CD4-positive, alpha-beta T cell (primary cell): ENCODE measurements at regions of chr1 and their contacts with region 1.

Region 1: DNA sequence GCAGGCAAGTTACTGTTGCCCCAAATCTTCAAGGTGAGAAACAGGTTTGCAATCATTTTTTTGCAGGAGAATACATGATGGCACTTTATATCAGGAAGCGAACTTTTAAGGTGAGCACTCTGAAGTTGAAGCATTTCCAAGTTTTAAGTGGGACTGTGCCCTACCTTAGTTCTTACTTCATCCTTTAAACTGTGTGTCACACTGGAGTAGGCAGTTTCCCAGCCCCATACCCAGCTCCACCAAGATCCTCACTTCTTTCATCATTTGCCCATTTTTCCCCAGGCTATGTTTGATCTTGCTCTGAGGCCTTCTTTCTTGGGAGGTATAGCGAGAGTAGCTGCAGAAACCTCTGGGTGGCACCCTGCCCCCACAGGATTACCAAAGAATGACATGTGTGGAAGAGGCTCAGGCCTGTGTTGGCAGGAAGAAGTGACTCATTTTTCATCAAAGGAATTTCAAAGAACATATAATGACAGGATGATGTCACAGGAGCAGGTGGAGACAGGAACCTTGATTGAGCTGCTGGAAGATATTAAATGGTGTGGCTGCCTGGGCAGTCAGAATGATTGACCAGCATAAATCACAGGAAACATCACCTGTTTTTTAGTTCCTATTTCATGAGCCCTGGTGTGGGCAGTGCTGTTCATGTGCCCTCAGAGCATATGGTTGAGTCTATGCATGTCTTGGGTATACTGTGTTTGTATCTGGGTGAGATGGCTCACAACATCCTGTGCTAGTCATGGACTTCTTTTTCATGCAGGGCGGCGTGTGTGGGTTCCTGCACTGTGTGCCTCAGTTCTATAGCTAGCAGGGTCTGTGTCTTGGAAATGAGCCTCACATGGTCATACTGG is 20.8 kb upstream of the MACF1 start:
- DNase-seq: peak; percentile 67 to 94 (median 80)
- ATAC-seq: peak; percentile 89
- H3K4me3 ChIP-seq: no peak overlapping the region
- H3K4me3 Mint-ChIP-seq: no peak overlapping the region
- H3K27ac ChIP-seq: peak overlapping the region; percentile 85 to 86
- H3K27ac Mint-ChIP-seq: peak overlapping the region; percentile 89
- H3K4me1 ChIP-seq: peaks cover 29% of the 10 kb centered on the region
- H3K4me1 Mint-ChIP-seq: peaks cover 42% of the 10 kb centered on the region
- H3K27me3 ChIP-seq: no peaks in the 10 kb centered on the region
- H3K27me3 Mint-ChIP-seq: no peaks in the 10 kb centered on the region
- CTCF ChIP-seq: peak; percentile 87

Region 2: DNA sequence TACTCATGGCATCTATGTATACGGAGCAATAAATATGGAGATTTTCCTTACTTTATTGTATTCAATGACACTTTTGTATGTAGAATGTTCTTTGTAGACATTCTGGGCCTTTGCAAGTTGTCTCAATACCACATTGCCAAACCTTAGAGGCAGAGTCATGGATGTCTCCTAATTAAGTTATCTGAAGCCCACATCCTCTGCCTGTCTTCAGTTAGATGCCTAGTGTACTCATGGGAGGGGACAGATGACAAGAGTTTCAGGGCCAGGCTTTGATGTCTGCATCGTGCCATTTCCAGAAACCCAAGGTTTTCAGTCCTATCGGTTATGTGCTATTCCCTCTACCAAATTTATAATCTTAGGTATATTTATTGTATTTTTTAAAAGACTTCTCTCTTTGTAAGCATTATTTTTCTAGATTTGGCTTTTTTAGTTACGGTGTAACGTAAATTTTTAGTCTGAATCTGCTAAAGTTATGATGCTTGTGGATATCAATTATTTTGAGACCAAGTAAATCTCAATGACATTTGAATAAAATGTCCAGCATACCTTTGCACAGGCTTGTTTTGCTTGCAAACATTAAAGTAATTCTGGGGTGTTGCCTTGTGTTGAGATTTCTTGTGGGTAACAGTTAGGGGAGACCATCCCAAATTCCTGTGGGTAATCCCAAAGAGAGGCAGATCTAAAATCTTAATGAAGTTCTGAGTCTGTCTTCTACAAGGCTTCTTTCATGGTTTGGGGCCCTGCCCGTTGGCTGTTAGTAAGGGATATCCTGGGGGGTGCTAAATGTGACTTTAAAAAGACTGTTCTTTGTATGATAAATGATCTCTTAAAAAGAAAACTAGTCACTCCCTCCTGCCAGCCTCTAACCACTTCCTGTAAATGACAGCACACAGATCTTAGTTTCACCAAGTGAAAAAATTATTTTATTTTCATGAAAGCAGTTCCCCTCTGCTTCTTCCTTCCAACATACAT is 12.8 kb after region 1 on chr1:
- CTCF ChIA-PET with region 1: interaction called, 75 read pairs
- POLR2A ChIA-PET with region 1: interaction called, 32 read pairs
- intact Hi-C with region 1: loop called in 1 of 2 experiments (anchors 1 kb)
- DNase-seq: peak; percentile 31 to 94 (median 61)
- ATAC-seq: peak; percentile 66
- H3K4me3 ChIP-seq: peak overlapping the region; percentile 2
- H3K4me3 Mint-ChIP-seq: peak overlapping the region; percentile 77
- H3K27ac ChIP-seq: peak overlapping the region; percentile 81 to 85
- H3K27ac Mint-ChIP-seq: peak overlapping the region; percentile 93
- H3K4me1 ChIP-seq: peaks cover 68% of the 10 kb centered on the region
- H3K4me1 Mint-ChIP-seq: peaks cover 82% of the 10 kb centered on the region
- H3K27me3 ChIP-seq: no peaks in the 10 kb centered on the region
- H3K27me3 Mint-ChIP-seq: no peaks in the 10 kb centered on the region
- CTCF ChIP-seq: no peak

Region 3: DNA sequence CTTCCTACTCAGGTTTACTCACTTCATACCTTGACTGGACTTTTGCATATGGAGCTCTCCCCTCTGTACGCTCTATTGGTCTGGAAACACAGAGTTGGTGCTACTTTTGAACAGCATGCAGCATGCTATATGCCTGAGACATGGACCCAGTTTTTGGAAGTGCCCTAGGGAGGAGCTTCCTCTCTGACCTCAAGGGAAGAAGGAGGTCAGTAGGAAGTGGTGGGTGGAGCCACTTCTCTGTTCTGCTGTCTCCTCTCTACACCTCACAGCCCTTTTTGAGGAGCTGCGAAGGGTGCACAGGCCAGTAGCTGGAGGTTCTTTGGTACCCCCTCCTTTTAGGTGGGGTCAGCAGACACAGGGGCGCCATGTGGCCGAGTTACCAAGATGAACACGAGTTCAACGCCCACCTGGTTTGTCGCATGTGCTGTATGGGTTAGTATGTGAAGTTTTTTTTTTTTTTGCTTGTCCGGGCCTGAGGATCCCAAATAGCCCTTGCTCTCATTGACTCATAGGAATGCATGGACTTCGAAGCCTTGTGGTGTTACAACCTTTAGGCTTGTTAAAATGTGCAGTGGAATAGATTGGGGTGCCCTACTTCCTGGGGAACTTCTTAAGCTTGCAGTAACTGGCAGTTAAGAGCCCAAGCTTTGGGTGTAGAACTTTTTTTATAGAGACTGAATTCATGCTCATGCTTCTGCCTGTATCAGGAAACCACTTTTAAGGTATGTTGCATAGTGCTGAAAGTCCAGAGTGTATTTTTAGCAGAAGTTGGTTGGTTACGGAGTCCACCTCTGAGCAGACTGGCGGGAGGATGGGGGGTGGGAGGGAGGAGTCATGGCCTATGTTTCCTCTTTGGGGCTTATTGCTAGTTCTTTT is 31.5 kb after region 1 on chr1:
- CTCF ChIA-PET with region 1: interaction called, 28 read pairs
- POLR2A ChIA-PET with region 1: interaction called, 11 read pairs
- intact Hi-C with region 1: loop called in 1 of 2 experiments (anchors 5 kb)
- DNase-seq: peak in 10 of 14 experiments; percentile 17 to 73 (median 32)
- ATAC-seq: peak; percentile 74
- H3K4me3 ChIP-seq: peak overlapping the region; percentile 62
- H3K4me3 Mint-ChIP-seq: peak overlapping the region; percentile 89
- H3K27ac ChIP-seq: peak overlapping the region; percentile 52 to 77
- H3K27ac Mint-ChIP-seq: peak overlapping the region; percentile 89
- H3K4me1 ChIP-seq: peaks cover 43% of the 10 kb centered on the region
- H3K4me1 Mint-ChIP-seq: peaks cover 59% of the 10 kb centered on the region
- H3K27me3 ChIP-seq: no peaks in the 10 kb centered on the region
- H3K27me3 Mint-ChIP-seq: no peaks in the 10 kb centered on the region
- CTCF ChIP-seq: no peak

Region 4: GRCh38 chr1:39238476-39238875 is 54.7 kb after region 1 on chr1:
- CTCF ChIA-PET with region 1: interaction called, 13 read pairs
- POLR2A ChIA-PET with region 1: interaction called, 3 read pairs
- intact Hi-C with region 1: no loop called
- DNase-seq: no peak
- ATAC-seq: no peak
- H3K4me3 ChIP-seq: no peak overlapping the region
- H3K4me3 Mint-ChIP-seq: no peak overlapping the region
- H3K27ac ChIP-seq: no peak overlapping the region
- H3K27ac Mint-ChIP-seq: peak overlapping the region; percentile 75
- H3K4me1 ChIP-seq: peaks cover 22% of the 10 kb centered on the region
- H3K4me1 Mint-ChIP-seq: peaks cover 54% of the 10 kb centered on the region
- H3K27me3 ChIP-seq: no peaks in the 10 kb centered on the region
- H3K27me3 Mint-ChIP-seq: no peaks in the 10 kb centered on the region
- CTCF ChIP-seq: no peak

Region 5: GRCh38 chr1:39268112-39268581 is 84.4 kb after region 1 on chr1:
- CTCF ChIA-PET with region 1: interaction called, 376 read pairs
- POLR2A ChIA-PET with region 1: no interaction called
- intact Hi-C with region 1: no loop called
- DNase-seq: peak in 3 of 14 experiments; percentile 50 to 51 (median 51)
- ATAC-seq: peak; percentile 72
- H3K4me3 ChIP-seq: peak overlapping the region; percentile 2
- H3K4me3 Mint-ChIP-seq: peak overlapping the region; percentile 50
- H3K27ac ChIP-seq: no peak overlapping the region
- H3K27ac Mint-ChIP-seq: peak overlapping the region; percentile 67
- H3K4me1 ChIP-seq: peaks cover 40% of the 10 kb centered on the region
- H3K4me1 Mint-ChIP-seq: peaks cover 89% of the 10 kb centered on the region
- H3K27me3 ChIP-seq: no peaks in the 10 kb centered on the region
- H3K27me3 Mint-ChIP-seq: no peaks in the 10 kb centered on the region
- CTCF ChIP-seq: no peak